ENCODE measurements at regions of chr5 and their contacts with region 1.

Region 1: DNA sequence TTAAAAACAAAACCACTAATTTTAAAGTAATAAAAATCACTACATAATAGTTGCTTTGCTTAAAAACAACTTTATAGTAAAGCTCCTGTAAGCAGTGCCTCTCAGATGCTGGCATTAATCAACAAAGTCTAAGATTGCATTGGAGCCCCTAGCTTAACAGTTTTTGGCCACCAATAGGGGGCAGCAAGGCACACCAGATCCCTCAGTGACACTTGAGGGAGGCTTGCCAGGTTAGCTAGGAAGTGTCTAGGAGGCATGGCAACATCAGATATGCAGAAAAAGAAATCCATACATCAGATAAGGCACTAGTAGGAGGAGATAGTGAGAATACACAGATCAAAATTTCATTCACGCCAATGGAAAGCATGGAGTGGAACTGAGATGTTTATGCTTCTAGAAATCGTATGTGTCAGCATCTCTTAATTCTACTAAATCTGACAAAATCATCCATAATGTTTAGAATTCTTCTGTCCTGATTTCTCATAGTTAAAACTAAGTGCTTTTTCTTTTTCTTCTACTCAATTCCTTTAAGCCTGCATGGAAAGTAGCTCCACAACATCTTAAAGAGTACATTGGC is 73.6 kb upstream of the PAM start:
- DNase-seq: no peak
- H3K4me3 ChIP-seq: no peak overlapping the region
- H3K27ac ChIP-seq: no peak overlapping the region
- H3K4me1 ChIP-seq: no peaks in the 10 kb centered on the region
- H3K27me3 ChIP-seq: no peaks in the 10 kb centered on the region
- CTCF ChIP-seq: peak; percentile 62 to 73 (median 63)
- EP300 ChIP-seq: no peak
- POLR2A ChIP-seq: no peak

Region 2: GRCh38 chr5:102523541-102524175 is 157.8 kb before region 1 on chr5:
- intact Hi-C with region 1: no loop called
- DNase-seq: no peak
- H3K4me3 ChIP-seq: no peak overlapping the region
- H3K27ac ChIP-seq: no peak overlapping the region
- H3K4me1 ChIP-seq: peaks cover 0 to 3% (median 0%) of the 10 kb centered on the region in 4 donors
- H3K27me3 ChIP-seq: no peaks in the 10 kb centered on the region
- CTCF ChIP-seq: no peak
- EP300 ChIP-seq: no peak
- POLR2A ChIP-seq: no peak

Region 3: GRCh38 chr5:103041071-103041676 is 359.7 kb after region 1 on chr5:
- intact Hi-C with region 1: loop called (anchors 5 kb)
- DNase-seq: no peak
- H3K4me3 ChIP-seq: no peak overlapping the region
- H3K27ac ChIP-seq: no peak overlapping the region
- H3K4me1 ChIP-seq: no peaks in the 10 kb centered on the region
- H3K27me3 ChIP-seq: no peaks in the 10 kb centered on the region
- CTCF ChIP-seq: peak; percentile 40 to 52 (median 46)
- EP300 ChIP-seq: no peak
- POLR2A ChIP-seq: no peak

Measured in esophagus muscularis mucosa (tissue), 4 donors.